ENCODE measurements at regions of chr20 and their contacts with region 1.

Region 1: GRCh38 chr20:63864847-63865640 is at the start of gene TPD52L2:
- DNase-seq: peak; percentile 98
- H3K4me3 ChIP-seq: peak within 1 kb of the TSS; percentile 67 to 94 (median 88)
- H3K27ac ChIP-seq: peak within 1 kb of the TSS; percentile 91 to 99 (median 97)
- H3K4me1 ChIP-seq: peaks cover 22 to 86% (median 64%) of the 10 kb centered on the region in 6 donors
- H3K27me3 ChIP-seq: no peaks in the 10 kb centered on the region
- CTCF ChIP-seq: peak in 2 of 11 experiments; percentile 29 to 37
- POLR2A ChIP-seq: peak; percentile 45 to 77 (median 61)
- total RNA-seq, gene TPD52L2: 66.3 to 102 (median 92.1) TPM

Region 2: GRCh38 chr20:63707549-63708300 is 157.3 kb before region 1 on chr20 and contains the starts of genes ARFRP1 and ZGPAT:
- intact Hi-C with region 1: loop called (anchors 10 kb)
- DNase-seq: peak; percentile 98
- H3K4me3 ChIP-seq: peak within 1 kb of the TSS; percentile 75 to 98 (median 90)
- H3K27ac ChIP-seq: peak within 1 kb of the TSS; percentile 83 to 95 (median 90)
- H3K4me1 ChIP-seq: peaks cover 27 to 90% (median 71%) of the 10 kb centered on the region in 6 donors
- H3K27me3 ChIP-seq: no peaks in the 10 kb centered on the region
- CTCF ChIP-seq: peak in 3 of 11 experiments; percentile 11 to 40 (median 32)
- POLR2A ChIP-seq: peak in 1 of 3 donors; percentile 29
- total RNA-seq, gene ARFRP1: 36.7 to 84.2 (median 60.8) TPM
- total RNA-seq, gene ZGPAT: 23.6 to 45.7 (median 38.1) TPM